ENCODE measurements at regions of chr2 and their contacts with region 1.

Region 1: GRCh38 chr2:38581193-38582147 is 21.3 kb downstream of the HNRNPLL start:
- DNase-seq: peak; percentile 80

Region 2: DNA sequence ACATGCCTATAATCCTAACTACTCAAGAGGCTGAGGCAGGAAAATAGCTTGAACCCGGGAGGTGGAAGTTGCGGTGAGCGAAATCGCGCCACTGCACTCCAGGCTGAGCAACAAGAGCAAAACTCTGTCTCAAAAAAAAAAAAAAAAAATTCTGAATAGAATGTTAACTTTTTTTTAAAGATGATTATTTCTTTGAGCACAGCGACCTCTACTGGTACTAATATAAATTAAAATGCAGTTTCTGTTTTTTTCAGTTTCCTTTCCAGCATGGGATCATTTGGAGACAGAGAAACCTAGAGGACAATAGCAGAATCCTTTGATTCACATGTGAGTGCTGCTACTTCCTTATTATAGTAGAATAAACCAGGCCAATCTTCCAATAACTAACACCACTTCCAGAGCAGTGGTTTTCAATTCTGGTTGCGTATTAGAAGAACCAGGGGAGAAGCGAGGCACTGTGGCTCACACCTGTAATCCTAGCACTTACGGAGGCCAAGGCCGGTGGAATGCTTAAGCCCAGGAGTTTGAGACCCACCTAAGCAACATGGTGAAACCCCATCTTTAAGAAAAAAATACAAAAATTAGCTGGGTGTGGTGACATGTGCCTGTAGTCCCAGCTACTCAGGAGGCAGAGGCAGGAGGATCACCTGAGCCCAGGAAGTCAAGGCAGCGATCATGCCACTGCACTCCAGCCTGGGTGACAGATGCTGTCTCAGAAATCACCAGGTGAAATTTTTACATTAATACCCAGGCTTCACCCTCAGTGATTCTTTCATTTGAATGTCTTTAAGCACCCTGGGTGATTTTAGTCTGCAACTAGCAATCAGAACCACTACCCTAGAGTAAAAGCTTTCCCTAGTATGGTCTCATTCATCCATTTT is 159.6 kb after region 1 on chr2:
- in situ Hi-C with region 1: loop called (anchors 25 kb)
- DNase-seq: peak; percentile 60